Endothelial cell of umbilical vein (primary cell): ENCODE measurements at regions of chr3 and their contacts with region 1.

Region 1: DNA sequence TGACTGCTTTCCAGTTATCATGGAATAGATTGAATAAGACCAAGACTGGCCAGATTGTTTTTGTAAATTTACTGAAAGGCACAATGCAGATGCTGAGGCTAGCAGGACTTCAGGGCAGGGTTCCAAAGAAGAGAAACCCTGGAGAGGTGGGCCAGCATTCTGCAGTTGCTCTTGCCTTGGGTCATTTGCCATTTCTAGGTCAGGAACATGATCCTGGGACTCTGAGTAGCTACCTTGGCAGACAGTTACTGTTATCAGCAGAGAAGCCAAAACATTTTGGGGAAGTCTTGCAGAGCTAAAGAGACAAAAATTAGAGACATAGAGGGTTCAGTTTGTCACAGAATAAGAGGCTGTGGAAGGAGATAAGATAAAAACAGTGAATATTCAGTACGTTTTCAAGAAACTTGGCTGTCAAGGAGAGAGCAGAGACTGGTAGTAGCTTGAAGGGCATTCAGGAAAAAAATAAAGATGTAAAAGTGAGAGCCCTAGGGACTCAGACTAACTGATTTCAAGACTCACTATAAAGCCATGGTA is 46.8 kb upstream of the MYRIP start:
- DNase-seq: no peak
- H3K4me3 ChIP-seq: no peak overlapping the region
- H3K27ac ChIP-seq: no peak overlapping the region
- H3K4me1 ChIP-seq: peaks cover 10% of the 10 kb centered on the region
- H3K27me3 ChIP-seq: no peaks in the 10 kb centered on the region
- CTCF ChIP-seq: no peak
- POLR2A ChIP-seq: no peak

Region 2: DNA sequence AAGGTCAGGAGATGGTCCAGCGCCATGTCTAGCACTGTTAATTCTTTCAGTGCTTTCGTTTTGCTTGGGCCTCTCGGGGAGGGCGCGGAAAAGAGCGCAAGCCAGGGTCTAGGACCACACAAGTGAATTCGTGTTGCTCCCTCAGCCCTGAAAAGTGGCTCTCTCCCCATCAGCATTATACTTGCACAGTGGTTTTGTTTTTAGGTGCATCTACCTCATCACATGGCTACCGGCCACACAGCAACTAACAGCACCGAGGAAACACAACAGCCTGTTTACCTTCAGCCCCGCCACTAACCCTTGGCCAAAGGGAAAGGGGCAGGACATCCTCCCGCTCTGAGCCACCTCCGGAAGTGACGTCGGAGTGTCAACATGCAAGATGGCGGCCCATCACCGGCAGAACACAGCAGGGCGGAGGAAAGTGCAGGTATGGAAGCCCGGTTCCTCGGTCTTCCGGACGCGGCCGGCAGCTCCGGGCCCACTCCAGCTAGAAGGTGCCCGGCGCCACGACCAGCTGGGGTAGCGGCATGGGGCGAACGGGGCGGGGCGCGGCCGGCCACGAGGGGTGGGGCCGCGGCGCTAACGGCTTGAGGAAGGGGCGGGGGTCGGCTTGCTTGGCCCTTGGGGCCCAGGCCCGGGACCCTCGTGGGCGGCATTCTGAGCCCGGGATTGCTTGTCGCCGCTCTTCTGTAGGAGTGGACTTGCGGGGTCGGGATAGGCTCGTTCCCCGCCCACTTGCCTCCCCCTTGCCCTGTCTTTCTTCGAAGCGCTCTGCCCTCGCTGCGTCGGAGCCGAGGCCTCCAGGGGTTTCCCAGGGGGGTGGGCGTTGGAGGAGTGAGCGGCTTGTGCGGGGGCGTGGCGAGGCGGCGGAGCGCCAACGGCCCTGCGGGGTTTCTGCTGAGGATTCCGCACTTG is 710.7 kb before region 1 on chr3 and contains the starts of genes SCN11A and WDR48:
- CTCF ChIA-PET with region 1: no interaction called
- POLR2A ChIA-PET with region 1: no interaction called
- dilution Hi-C with region 1: no loop called
- intact Hi-C with region 1: no loop called
- DNase-seq: peak; percentile 92
- H3K4me3 ChIP-seq: peak within 1 kb of the TSS; percentile 54 to 96 (median 80)
- H3K27ac ChIP-seq: peak within 1 kb of the TSS; percentile 58
- H3K4me1 ChIP-seq: peaks cover 6% of the 10 kb centered on the region
- H3K27me3 ChIP-seq: peaks cover 4% of the 10 kb centered on the region in 2 experiments
- CTCF ChIP-seq: no peak
- POLR2A ChIP-seq: peak; percentile 81
- total RNA-seq, gene SCN11A: 0.07 TPM in 1 of 2 replicates, not detected in the other
- total RNA-seq, gene WDR48: 25.3 and 31.2 TPM in 2 replicates

Region 3: GRCh38 chr3:39801216-39801615 is 38.6 kb after region 1 on chr3:
- CTCF ChIA-PET with region 1: no interaction called
- POLR2A ChIA-PET with region 1: no interaction called
- dilution Hi-C with region 1: no loop called
- intact Hi-C with region 1: no loop called
- DNase-seq: no peak
- H3K4me3 ChIP-seq: no peak overlapping the region
- H3K27ac ChIP-seq: no peak overlapping the region
- H3K4me1 ChIP-seq: no peaks in the 10 kb centered on the region
- H3K27me3 ChIP-seq: no peaks in the 10 kb centered on the region
- CTCF ChIP-seq: no peak
- POLR2A ChIP-seq: no peak

Region 4: GRCh38 chr3:40137593-40138295 is 375.1 kb after region 1 on chr3:
- CTCF ChIA-PET with region 1: no interaction called
- POLR2A ChIA-PET with region 1: no interaction called
- dilution Hi-C with region 1: no loop called
- intact Hi-C with region 1: loop called (anchors 1 kb)
- DNase-seq: no peak
- H3K4me3 ChIP-seq: no peak overlapping the region
- H3K27ac ChIP-seq: no peak overlapping the region
- H3K4me1 ChIP-seq: no peaks in the 10 kb centered on the region
- H3K27me3 ChIP-seq: no peaks in the 10 kb centered on the region
- CTCF ChIP-seq: no peak
- POLR2A ChIP-seq: no peak